PC-3 (cell line): ENCODE measurements at regions of chr2 and their contacts with region 1.

Region 1: DNA sequence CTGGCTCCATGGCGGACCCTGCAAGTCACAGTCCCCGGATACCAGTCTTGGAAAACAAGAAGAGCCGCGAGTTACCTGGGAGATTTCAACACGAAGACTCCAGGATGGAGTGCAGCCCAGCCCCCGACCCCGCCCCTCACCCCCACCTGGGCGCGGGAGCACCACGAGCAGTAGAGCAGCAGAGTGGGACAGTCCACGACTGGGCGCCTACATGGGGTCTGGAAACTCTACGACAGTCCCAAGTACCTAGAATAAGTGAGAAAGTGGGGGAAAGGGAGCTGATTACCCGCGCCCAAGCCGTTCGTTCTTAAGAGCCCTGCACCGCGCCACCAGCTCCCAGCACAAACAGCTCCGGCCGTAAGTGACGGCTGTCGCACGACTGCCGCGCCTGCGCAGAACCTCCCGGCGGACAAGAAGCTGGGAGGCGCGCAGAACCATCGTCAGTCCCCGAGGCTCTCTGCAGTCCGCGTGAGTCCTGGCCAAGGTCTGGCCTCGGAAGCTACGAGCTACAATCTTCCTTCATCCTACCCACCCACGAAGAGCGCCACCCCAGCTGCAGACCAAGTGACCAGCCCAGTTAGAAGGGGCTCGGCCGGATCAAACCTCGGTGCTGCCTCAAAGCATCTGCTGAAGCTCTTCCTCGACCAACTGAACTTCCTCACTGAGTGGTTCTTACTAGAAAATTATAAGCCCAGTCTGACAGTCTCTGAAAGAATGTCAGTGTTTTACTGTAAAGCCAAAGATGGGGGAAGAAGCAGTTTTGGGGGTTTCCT is at the start of gene DPY30:
- DNase-seq: peak; percentile 93
- ATAC-seq: peak; percentile 88
- H3K4me3 ChIP-seq: peak within 1 kb of the TSS; percentile 92
- H3K27ac ChIP-seq: peak within 1 kb of the TSS; percentile 50
- H3K4me1 ChIP-seq: peaks cover 6% of the 10 kb centered on the region
- H3K27me3 ChIP-seq: no peaks in the 10 kb centered on the region
- CTCF ChIP-seq: no peak; the same call in 1 of the 2 replicates
- total RNA-seq, gene DPY30: 104 and 127 TPM in 2 replicates

Region 2: DNA sequence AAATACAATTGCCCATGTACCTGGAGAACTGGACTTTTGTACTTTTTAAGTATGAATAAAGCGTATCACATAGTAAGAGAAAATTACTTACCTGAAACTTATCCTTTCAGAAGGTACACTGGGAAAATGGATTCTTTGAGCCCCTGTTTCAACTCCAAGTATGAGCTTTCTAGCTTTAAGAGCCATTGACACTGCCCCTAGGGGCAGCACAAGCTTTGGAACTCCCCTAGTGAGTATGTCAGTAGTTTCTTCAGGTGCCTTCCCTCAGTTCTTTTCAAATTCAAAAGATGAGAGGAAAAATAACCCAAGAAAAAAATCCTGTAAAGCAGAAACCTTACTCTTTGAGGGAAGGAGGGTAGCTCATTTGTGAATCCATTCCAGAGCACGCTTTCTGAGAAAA is 152.9 kb before region 1 on chr2:
- CTCF ChIA-PET with region 1: no interaction called
- POLR2A ChIA-PET with region 1: interaction called, 11 read pairs
- intact Hi-C with region 1: no loop called
- DNase-seq: peak; percentile 50
- ATAC-seq: peak; percentile 61
- H3K4me3 ChIP-seq: no peak overlapping the region
- H3K27ac ChIP-seq: no peak overlapping the region
- H3K4me1 ChIP-seq: no peaks in the 10 kb centered on the region
- H3K27me3 ChIP-seq: no peaks in the 10 kb centered on the region
- CTCF ChIP-seq: peak; percentile 68

Region 3: GRCh38 chr2:31962757-31963361 is 76.8 kb before region 1 on chr2:
- CTCF ChIA-PET with region 1: no interaction called
- POLR2A ChIA-PET with region 1: interaction called, 13 read pairs
- intact Hi-C with region 1: no loop called
- DNase-seq: peak; percentile 14
- ATAC-seq: no peak; the same call in 1 of the 2 replicates
- H3K4me3 ChIP-seq: no peak overlapping the region
- H3K27ac ChIP-seq: no peak overlapping the region
- H3K4me1 ChIP-seq: peaks cover 16% of the 10 kb centered on the region; the same call in 1 of the 2 replicates
- H3K27me3 ChIP-seq: no peaks in the 10 kb centered on the region
- CTCF ChIP-seq: no peak

Region 4: GRCh38 chr2:32010670-32011484 is 28.8 kb before region 1 on chr2 and contains the start of gene MEMO1:
- CTCF ChIA-PET with region 1: interaction called, 3 read pairs
- POLR2A ChIA-PET with region 1: interaction called, 12 read pairs
- intact Hi-C with region 1: loop called (anchors 2 kb)
- DNase-seq: peak; percentile 90
- ATAC-seq: peak; percentile 68
- H3K4me3 ChIP-seq: peak within 1 kb of the TSS; percentile 98
- H3K27ac ChIP-seq: peak within 1 kb of the TSS; percentile 81
- H3K4me1 ChIP-seq: peaks cover 23% of the 10 kb centered on the region; the same call in 1 of the 2 replicates
- H3K27me3 ChIP-seq: no peaks in the 10 kb centered on the region
- CTCF ChIP-seq: no peak
- total RNA-seq, gene MEMO1: 49.5 and 59.9 TPM in 2 replicates

Region 5: GRCh38 chr2:32063310-32064161 is 23.9 kb after region 1 on chr2 and contains the start of gene SPAST:
- CTCF ChIA-PET with region 1: interaction called, 6 read pairs
- POLR2A ChIA-PET with region 1: interaction called, 17 read pairs
- intact Hi-C with region 1: loop called (anchors 1 kb)
- DNase-seq: peak; percentile 99
- ATAC-seq: peak; percentile 89
- H3K4me3 ChIP-seq: peak within 1 kb of the TSS; percentile 93
- H3K27ac ChIP-seq: peak within 1 kb of the TSS; percentile 48
- H3K4me1 ChIP-seq: peaks cover 19% of the 10 kb centered on the region
- H3K27me3 ChIP-seq: no peaks in the 10 kb centered on the region
- CTCF ChIP-seq: peak; percentile 37; the same call in 1 of the 2 replicates
- total RNA-seq, gene SPAST: 15.5 and 21.6 TPM in 2 replicates

Region 6: GRCh38 chr2:32118055-32118454 is 78.4 kb after region 1 on chr2:
- CTCF ChIA-PET with region 1: no interaction called
- POLR2A ChIA-PET with region 1: interaction called, 6 read pairs
- intact Hi-C with region 1: loop called (anchors 5 kb)
- DNase-seq: peak; percentile 59
- ATAC-seq: peak; percentile 64
- H3K4me3 ChIP-seq: no peak overlapping the region
- H3K27ac ChIP-seq: peak overlapping the region; percentile 61
- H3K4me1 ChIP-seq: peaks cover 25% of the 10 kb centered on the region
- H3K27me3 ChIP-seq: no peaks in the 10 kb centered on the region
- CTCF ChIP-seq: no peak

Region 7: DNA sequence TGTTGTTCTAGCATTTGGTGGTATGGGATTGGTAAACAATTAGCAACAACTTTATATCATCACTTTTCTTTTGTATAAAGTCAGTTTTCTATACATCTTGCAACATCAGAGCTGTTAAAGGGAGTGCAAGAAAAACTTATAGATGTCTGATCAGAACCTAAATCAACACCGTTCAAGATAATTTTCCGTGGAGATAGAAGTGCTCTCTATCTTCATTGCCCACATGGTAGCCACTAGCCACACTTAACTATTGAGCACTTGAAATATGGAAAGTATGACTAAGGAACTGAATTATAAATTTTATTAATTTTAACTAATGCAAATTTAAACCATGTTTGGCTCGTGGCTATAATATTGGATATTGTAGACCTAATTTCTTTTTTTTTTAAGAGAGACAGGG is 593.4 kb after region 1 on chr2:
- CTCF ChIA-PET with region 1: no interaction called
- POLR2A ChIA-PET with region 1: no interaction called
- intact Hi-C with region 1: no loop called
- DNase-seq: no peak
- ATAC-seq: no peak
- H3K4me3 ChIP-seq: no peak overlapping the region
- H3K27ac ChIP-seq: no peak overlapping the region
- H3K4me1 ChIP-seq: peaks cover 20% of the 10 kb centered on the region
- H3K27me3 ChIP-seq: no peaks in the 10 kb centered on the region
- CTCF ChIP-seq: no peak